Heart right ventricle (tissue), 16 donors: ENCODE measurements at regions of chr3 and their contacts with region 1.

Region 1: DNA sequence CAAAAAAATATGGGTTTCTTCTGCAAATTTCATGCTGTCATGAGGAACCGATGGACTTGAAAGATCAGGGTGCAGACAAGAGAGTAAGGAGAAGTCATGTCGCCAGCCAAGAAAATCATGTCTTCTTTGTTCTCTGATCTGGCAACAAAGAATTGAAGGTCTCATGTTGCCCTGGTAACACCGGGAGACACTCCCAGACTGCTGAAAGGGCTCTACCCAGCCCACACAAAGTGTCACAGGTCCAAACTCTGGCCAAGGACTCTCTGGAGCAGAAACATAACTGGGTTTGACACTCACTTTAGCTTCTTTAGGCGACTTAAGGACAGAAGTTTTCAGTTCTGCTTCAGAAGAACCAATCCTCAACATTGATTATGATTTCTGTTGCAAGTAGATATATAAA is 42.9 kb downstream of the SIDT1 start:
- DNase-seq: no peak
- ATAC-seq: no peak
- H3K4me3 ChIP-seq: no peak overlapping the region
- H3K27ac ChIP-seq: no peak overlapping the region
- H3K4me1 ChIP-seq: no peaks in the 10 kb centered on the region
- H3K27me3 ChIP-seq: peaks cover 0 to 19% (median 5%) of the 10 kb centered on the region in 7 donors
- CTCF ChIP-seq: no peak

Region 2: GRCh38 chr3:113514265-113514769 is 60.9 kb before region 1 on chr3:
- intact Hi-C with region 1: loop called in 1 of 10 experiments (anchors 10 kb)
- DNase-seq: no peak
- ATAC-seq: peak in 4 of 8 donors; percentile 3 to 29 (median 15)
- H3K4me3 ChIP-seq: peak overlapping the region; percentile 58 to 99 (median 86)
- H3K27ac ChIP-seq: peak overlapping the region in 9 of 10 donors; percentile 62 to 91 (median 82)
- H3K4me1 ChIP-seq: peaks cover 0 to 22% (median 13%) of the 10 kb centered on the region in 9 donors
- H3K27me3 ChIP-seq: peaks cover 0 to 14% (median 6%) of the 10 kb centered on the region in 7 donors
- CTCF ChIP-seq: no peak